Ascending aorta (tissue), 2 donors: ENCODE measurements at regions of chr22 and their contacts with region 1.

Region 1: DNA sequence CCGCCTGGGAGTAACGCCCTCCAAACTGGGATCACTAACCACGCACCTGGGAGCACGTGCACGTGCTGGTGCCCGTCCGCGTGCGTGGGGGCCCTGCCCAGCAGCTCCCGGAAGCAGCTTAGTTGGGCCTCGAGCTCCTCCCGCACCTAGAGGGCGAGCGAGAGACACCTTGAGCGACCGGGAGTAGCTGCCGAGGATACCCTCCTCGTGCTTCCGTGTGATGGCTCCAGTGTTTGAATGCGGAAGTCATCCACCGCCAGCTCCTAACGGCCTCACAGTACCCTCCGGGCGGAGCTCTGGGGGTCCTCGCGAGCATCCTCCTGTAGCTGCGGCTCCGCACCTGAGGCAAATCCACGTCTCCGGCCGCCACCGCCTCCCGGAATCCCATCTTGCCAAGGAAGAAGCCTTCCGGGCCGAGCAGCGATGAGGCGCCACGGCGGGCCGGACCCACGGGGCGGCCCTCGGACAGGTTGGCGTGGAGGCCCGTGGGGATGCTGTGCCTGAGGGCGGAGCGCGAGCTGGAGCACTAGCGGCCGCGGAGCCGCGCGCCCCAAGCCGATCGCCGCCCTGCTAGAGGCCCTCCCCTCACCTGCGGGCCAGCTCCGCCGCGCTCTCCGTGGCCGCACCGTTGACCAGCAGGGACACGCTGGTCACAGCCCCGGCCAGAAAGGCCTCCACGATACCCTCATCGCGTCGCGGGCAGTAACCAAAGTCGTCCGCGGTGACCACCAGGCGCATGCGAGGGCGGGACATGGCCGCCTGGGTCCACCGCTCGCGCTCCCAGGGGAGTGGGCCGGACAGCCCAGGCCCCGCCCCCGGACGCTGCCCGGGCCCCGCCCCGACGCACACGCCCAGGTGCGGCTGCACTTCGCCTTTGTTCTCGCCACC is at the start of gene YDJC:
- DNase-seq: peak; percentile 73 to 96
- H3K4me3 ChIP-seq: peak within 1 kb of the TSS; percentile 88 to 89
- H3K27ac ChIP-seq: peak within 1 kb of the TSS; percentile 77 to 87
- H3K4me1 ChIP-seq: peaks cover 6 to 16% of the 10 kb centered on the region in 2 donors
- H3K27me3 ChIP-seq: no peaks in the 10 kb centered on the region
- CTCF ChIP-seq: peak in 2 of 3 experiments; percentile 34 to 46
- total RNA-seq, gene YDJC: 80.8 TPM

Region 2: DNA sequence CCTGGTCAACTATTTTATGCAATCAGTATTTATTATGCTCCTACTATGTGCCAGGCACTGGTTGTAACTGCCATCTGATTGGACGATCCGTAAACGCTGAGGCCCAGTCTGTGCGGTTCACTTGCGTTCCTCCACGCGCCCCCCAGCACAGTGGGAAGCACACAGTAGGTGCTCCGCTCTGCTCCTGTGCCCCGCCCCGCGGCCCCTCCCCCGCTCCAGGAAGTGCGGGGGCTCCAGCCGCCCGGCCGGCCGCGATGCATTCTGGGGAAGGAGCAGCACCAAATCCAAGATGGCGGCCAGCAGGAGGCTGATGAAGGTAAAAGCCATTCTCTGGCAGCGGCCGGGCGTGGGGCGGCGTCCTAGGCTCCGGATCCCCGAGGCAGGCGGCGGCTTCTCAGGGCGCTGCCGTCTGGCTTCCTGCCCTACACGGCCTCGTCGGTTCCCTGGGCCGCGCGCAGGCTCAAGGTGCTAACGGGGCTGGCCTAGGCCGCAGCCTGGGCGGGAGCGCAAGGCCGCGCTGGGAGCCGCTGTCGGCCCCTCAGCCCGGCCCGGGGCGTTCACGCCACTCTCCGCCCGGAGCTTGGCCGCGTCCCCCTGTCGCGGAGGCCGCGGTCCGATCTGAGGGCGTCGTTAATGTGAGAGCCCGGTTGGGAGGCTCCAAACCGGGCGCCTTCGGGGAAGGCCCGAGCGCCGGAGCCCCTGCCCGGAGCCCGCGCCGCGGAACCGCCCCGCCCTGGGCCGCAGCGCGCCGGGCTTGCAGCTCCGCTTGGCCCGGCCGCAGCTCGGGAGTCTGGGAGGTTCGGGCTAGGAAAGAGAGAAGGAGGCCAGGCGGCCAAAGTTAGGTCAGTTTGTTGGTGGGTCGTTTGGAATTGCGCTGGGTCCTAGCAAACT is 61.8 kb before region 1 on chr22 and contains the start of gene UBE2L3:
- intact Hi-C with region 1: loop called (anchors 2 kb)
- DNase-seq: peak; percentile 23 to 89
- H3K4me3 ChIP-seq: peak within 1 kb of the TSS; percentile 79 to 86
- H3K27ac ChIP-seq: peak within 1 kb of the TSS; percentile 86 to 91
- H3K4me1 ChIP-seq: peaks cover 4 to 19% of the 10 kb centered on the region in 2 donors
- H3K27me3 ChIP-seq: no peaks in the 10 kb centered on the region
- CTCF ChIP-seq: no peak
- total RNA-seq, gene UBE2L3: 22.0 TPM

Region 3: DNA sequence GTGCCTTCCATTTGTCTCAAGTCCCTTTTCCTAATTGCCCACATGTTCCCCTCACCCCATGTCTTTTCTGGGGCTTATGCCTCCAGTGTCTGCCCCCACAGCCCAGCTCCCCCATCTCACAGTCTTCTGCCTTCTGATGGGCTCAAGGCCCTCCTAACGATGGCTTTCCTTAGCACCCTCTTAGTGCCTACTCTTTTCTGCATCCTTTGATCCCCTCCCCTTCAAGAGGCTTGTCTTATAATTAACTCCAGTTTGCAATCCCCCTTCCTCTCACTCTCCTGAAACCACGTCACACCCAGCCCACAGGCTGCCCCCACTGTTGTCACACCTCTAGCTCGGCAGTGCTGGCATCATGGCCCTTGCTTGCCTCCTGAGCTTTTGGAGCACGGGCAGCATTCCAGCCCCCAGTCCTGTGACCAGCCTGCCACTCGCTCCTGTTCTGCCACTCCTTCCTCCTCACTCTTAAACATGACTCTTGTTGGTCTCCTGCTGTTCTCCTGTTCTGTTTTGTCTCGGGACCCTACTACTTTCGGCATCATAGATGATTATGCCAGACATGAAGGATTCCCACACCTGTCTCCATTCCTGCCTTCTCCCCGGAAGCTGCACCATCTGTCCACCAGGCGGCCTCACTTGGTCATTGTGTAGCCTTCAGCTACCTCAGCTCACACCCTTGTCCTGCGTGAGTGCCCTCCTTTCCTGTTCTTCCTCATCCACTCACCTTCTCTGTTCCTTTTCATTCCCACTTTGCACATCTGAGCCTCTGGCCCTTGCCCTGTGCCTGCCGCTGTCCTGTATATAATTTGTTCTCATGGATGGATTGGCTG is 35.9 kb before region 1 on chr22:
- intact Hi-C with region 1: loop called (anchors 5 kb)
- DNase-seq: no peak
- H3K4me3 ChIP-seq: no peak overlapping the region
- H3K27ac ChIP-seq: no peak overlapping the region
- H3K4me1 ChIP-seq: peaks cover 9 to 29% of the 10 kb centered on the region in 2 donors
- H3K27me3 ChIP-seq: no peaks in the 10 kb centered on the region
- CTCF ChIP-seq: no peak

Region 4: GRCh38 chr22:21641789-21642583 is 12.5 kb after region 1 on chr22 and contains the start of gene SDF2L1:
- intact Hi-C with region 1: loop called (anchors 1 kb)
- DNase-seq: peak; percentile 98 to 100
- H3K4me3 ChIP-seq: peak within 1 kb of the TSS; percentile 63 to 83
- H3K27ac ChIP-seq: peak within 1 kb of the TSS; percentile 69 to 80
- H3K4me1 ChIP-seq: peaks cover 0 to 14% of the 10 kb centered on the region in 2 donors
- H3K27me3 ChIP-seq: no peaks in the 10 kb centered on the region
- CTCF ChIP-seq: peak in 2 of 3 experiments; percentile 10 to 16
- total RNA-seq, gene SDF2L1: 37.4 TPM